Ascending aorta (tissue), 2 donors: ENCODE measurements at regions of chr16 and their contacts with region 1.

Region 1: DNA sequence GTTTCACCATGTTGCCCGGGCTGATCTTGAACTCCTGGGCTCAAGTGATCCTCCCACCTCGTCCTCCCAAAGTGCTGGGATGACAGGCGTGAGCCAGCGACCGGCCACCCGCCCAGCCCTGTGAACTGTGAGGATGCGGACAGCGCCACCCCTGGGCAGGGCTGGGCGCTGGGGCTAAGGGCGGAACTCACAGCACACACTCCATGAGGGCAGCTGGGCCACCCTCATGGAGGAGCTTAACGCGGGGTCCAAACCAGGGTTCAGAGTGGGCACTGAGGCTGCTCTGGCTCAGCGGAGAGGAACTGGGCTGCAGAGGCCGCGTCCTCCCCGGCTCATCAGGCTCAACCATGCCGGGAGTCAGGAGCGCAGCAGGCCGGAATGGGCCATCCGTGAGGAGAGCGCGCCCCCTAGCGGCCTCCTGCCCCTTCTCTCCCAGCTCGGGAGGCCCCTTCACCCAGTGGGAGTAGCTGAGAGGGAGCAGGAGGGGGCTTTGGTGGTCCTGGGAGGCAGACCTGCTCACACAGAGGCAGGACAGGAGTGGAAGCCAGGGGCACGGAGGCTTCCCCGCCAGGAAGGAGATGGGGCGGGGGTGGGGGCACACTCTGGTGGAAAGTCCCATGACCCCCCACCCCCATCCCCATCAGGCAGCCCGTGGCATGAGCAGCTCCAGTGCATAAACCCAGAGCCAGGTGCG is 13.8 kb downstream of the CORO7 start:
- DNase-seq: peak in 1 of 2 donors; percentile 89
- H3K4me3 ChIP-seq: peak overlapping the region in 1 of 2 donors; percentile 40
- H3K27ac ChIP-seq: no peak overlapping the region
- H3K4me1 ChIP-seq: peaks cover 0 to 3% of the 10 kb centered on the region in 2 donors
- H3K27me3 ChIP-seq: no peaks in the 10 kb centered on the region
- CTCF ChIP-seq: peak; percentile 86 to 97 (median 96)

Region 2: GRCh38 chr16:4358831-4359561 is 43.6 kb before region 1 on chr16:
- intact Hi-C with region 1: loop called (anchors 1 kb)
- DNase-seq: peak in 1 of 2 donors; percentile 80
- H3K4me3 ChIP-seq: no peak overlapping the region
- H3K27ac ChIP-seq: no peak overlapping the region
- H3K4me1 ChIP-seq: no peaks in the 10 kb centered on the region
- H3K27me3 ChIP-seq: no peaks in the 10 kb centered on the region
- CTCF ChIP-seq: peak; percentile 98 to 99 (median 99)

Region 3: GRCh38 chr16:4475880-4476788 is 73.5 kb after region 1 on chr16 and contains the start of gene HMOX2:
- intact Hi-C with region 1: no loop called
- DNase-seq: peak; percentile 73 to 95
- H3K4me3 ChIP-seq: peak within 1 kb of the TSS; percentile 61 to 93
- H3K27ac ChIP-seq: peak within 1 kb of the TSS; percentile 86 to 89
- H3K4me1 ChIP-seq: peaks cover 10 to 26% of the 10 kb centered on the region in 2 donors
- H3K27me3 ChIP-seq: no peaks in the 10 kb centered on the region
- CTCF ChIP-seq: peak; percentile 49 to 61 (median 61)
- total RNA-seq, gene HMOX2: 36.7 TPM